ENCODE measurements at regions of chr5 and their contacts with region 1.

Region 1: DNA sequence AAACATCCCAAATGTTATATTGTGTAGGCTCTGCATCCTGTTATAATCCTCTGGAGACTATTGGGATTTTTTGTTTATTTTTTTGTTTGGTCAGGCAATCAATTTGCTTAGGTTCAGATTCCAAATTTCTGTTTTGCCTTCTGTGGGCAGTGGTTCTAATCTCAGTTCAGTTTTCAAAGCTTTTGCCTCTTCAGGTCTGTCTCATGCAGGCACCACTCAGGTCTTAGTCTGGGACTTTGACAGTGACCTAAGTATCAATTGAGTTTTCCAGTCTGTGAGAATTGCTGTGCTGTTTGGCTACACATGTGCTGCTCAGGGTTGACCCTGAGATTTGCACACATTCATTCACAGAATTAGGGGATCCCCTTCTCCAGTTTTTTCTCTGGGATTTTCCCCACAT is 14.1 kb downstream of the SNX2 start:
- DNase-seq: no peak
- ATAC-seq: no peak
- H3K4me3 ChIP-seq: no peak overlapping the region
- H3K4me3 Mint-ChIP-seq: no peak overlapping the region
- H3K27ac ChIP-seq: no peak overlapping the region
- H3K27ac Mint-ChIP-seq: no peak overlapping the region
- H3K4me1 ChIP-seq: no peaks in the 10 kb centered on the region
- H3K4me1 Mint-ChIP-seq: peaks cover 39% of the 10 kb centered on the region
- H3K27me3 ChIP-seq: no peaks in the 10 kb centered on the region
- H3K27me3 Mint-ChIP-seq: no peaks in the 10 kb centered on the region
- CTCF ChIP-seq: no peak

Region 2: DNA sequence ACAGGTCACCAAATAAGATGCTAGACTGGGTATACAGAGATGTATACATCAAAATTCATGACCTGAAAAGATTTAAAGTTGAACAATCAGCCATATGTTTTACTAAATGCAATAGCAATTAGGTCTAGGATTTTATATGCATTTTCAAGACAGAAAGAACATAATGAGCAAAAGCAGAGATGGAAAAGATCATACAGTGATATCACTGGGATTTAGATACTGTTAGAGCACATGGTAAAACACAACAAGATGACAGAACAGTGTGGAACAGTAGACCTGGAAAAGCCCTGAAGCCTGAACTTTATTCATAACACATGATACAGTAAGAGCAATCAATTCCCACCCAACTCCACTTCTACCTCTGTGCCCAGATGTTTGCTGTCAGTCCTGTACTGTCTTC is 1739.0 kb before region 1 on chr5:
- CTCF ChIA-PET with region 1: no interaction called
- POLR2A ChIA-PET with region 1: no interaction called
- intact Hi-C with region 1: no loop called
- DNase-seq: no peak
- ATAC-seq: no peak
- H3K4me3 ChIP-seq: no peak overlapping the region
- H3K4me3 Mint-ChIP-seq: no peak overlapping the region
- H3K27ac ChIP-seq: no peak overlapping the region
- H3K27ac Mint-ChIP-seq: no peak overlapping the region
- H3K4me1 ChIP-seq: no peaks in the 10 kb centered on the region
- H3K4me1 Mint-ChIP-seq: no peaks in the 10 kb centered on the region
- H3K27me3 ChIP-seq: no peaks in the 10 kb centered on the region
- H3K27me3 Mint-ChIP-seq: no peaks in the 10 kb centered on the region
- CTCF ChIP-seq: no peak

Region 3: DNA sequence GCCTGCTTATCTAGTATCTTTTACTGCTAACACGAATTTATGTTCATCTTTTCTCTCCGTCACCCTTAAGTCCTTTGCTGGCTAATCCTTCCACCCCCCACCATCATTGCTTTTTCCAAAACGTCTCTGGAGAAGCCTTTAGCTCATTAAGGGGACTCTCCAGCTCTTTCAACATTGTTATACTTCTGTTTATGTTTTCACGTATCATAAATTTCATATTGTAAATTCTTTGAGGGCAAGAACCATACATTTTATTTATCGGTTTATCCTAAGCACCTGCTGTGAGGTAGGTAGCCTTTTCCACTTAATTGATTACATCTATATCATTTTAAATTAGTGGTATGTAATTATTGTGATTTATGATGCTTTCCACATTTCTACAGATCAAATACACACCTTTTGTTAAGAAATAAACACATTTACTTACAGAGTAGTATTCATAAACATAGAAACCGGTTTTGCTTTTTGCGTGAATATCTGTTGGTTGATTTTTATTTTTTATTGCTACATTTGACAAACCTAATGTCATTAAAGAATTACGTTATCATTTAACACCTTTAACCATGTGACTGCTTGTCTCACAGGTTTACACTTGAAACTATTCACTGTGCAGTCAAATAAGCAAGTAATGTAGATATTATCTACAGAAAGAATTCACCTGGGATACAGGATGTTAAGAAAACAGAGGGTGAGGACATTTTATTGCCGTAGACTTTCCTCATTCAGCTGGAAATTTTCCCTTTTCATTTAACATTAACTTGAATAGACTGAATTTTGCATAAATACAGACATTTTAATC is 29.5 kb before region 1 on chr5:
- CTCF ChIA-PET with region 1: no interaction called
- POLR2A ChIA-PET with region 1: no interaction called
- intact Hi-C with region 1: loop called in 1 of 2 experiments (anchors 1 kb)
- DNase-seq: no peak
- ATAC-seq: no peak
- H3K4me3 ChIP-seq: no peak overlapping the region
- H3K4me3 Mint-ChIP-seq: no peak overlapping the region
- H3K27ac ChIP-seq: no peak overlapping the region
- H3K27ac Mint-ChIP-seq: no peak overlapping the region
- H3K4me1 ChIP-seq: no peaks in the 10 kb centered on the region
- H3K4me1 Mint-ChIP-seq: no peaks in the 10 kb centered on the region
- H3K27me3 ChIP-seq: no peaks in the 10 kb centered on the region
- H3K27me3 Mint-ChIP-seq: no peaks in the 10 kb centered on the region
- CTCF ChIP-seq: no peak